GM23248 (cell line): ENCODE measurements at regions of chr5 and their contacts with region 1.

Region 1: GRCh38 chr5:159915904-159916840 is at the start of gene ADRA1B:
- DNase-seq: peak; percentile 89
- H3K4me3 ChIP-seq: peak within 1 kb of the TSS; percentile 70
- H3K27ac ChIP-seq: no peak within 1 kb of the TSS
- H3K4me1 ChIP-seq: peaks cover 26% of the 10 kb centered on the region
- H3K27me3 ChIP-seq: no peaks in the 10 kb centered on the region
- total RNA-seq, gene ADRA1B: 0.32 and 0.63 TPM in 2 replicates

Region 2: GRCh38 chr5:158953929-158954534 is 962.1 kb before region 1 on chr5:
- in situ Hi-C with region 1: no loop called
- DNase-seq: peak; percentile 63
- H3K4me3 ChIP-seq: no peak overlapping the region
- H3K27ac ChIP-seq: no peak overlapping the region
- H3K4me1 ChIP-seq: peaks cover 25% of the 10 kb centered on the region
- H3K27me3 ChIP-seq: no peaks in the 10 kb centered on the region

Region 3: GRCh38 chr5:159531554-159532105 is 384.5 kb before region 1 on chr5:
- in situ Hi-C with region 1: loop called (anchors 5 kb)
- DNase-seq: peak; percentile 8
- H3K4me3 ChIP-seq: no peak overlapping the region
- H3K27ac ChIP-seq: no peak overlapping the region
- H3K4me1 ChIP-seq: peaks cover 5% of the 10 kb centered on the region; the same call in 1 of the 2 replicates
- H3K27me3 ChIP-seq: no peaks in the 10 kb centered on the region